ENCODE measurements at regions of chr19 and their contacts with region 1.

Region 1: GRCh38 chr19:2648528-2648937 is 54.0 kb downstream of the GNG7 start:
- DNase-seq: peak; percentile 78 to 89
- ATAC-seq: peak; percentile 80
- H3K4me3 ChIP-seq: no peak overlapping the region
- H3K27ac ChIP-seq: no peak overlapping the region
- H3K4me1 ChIP-seq: no peaks in the 10 kb centered on the region
- H3K27me3 ChIP-seq: no peaks in the 10 kb centered on the region

Region 2: GRCh38 chr19:2750808-2751443 is 102.4 kb after region 1 on chr19:
- intact Hi-C with region 1: loop called (anchors 1 to 5 kb)
- DNase-seq: no peak
- ATAC-seq: no peak
- H3K4me3 ChIP-seq: no peak overlapping the region
- H3K27ac ChIP-seq: no peak overlapping the region
- H3K4me1 ChIP-seq: no peaks in the 10 kb centered on the region
- H3K27me3 ChIP-seq: no peaks in the 10 kb centered on the region

Region 3: GRCh38 chr19:2869618-2870017 is 221.1 kb after region 1 on chr19:
- intact Hi-C with region 1: loop called (anchors 5 kb)
- DNase-seq: no peak
- ATAC-seq: no peak
- H3K4me3 ChIP-seq: no peak overlapping the region
- H3K27ac ChIP-seq: no peak overlapping the region
- H3K4me1 ChIP-seq: no peaks in the 10 kb centered on the region
- H3K27me3 ChIP-seq: no peaks in the 10 kb centered on the region